ENCODE measurements at regions of chr7 and their contacts with region 1.

Region 1: GRCh38 chr7:92904292-92905131 is 68.1 kb upstream of the CDK6 start:
- DNase-seq: no peak
- H3K4me3 ChIP-seq: no peak overlapping the region
- H3K27ac ChIP-seq: no peak overlapping the region
- H3K4me1 ChIP-seq: no peaks in the 10 kb centered on the region
- H3K27me3 ChIP-seq: no peaks in the 10 kb centered on the region
- CTCF ChIP-seq: no peak
- EP300 ChIP-seq: no peak
- POLR2A ChIP-seq: no peak

Region 2: GRCh38 chr7:92982928-92983327 is 78.4 kb after region 1 on chr7:
- intact Hi-C with region 1: loop called in 1 of 4 experiments (anchors 5 kb)
- DNase-seq: no peak
- H3K4me3 ChIP-seq: no peak overlapping the region
- H3K27ac ChIP-seq: no peak overlapping the region
- H3K4me1 ChIP-seq: no peaks in the 10 kb centered on the region
- H3K27me3 ChIP-seq: no peaks in the 10 kb centered on the region
- CTCF ChIP-seq: no peak
- EP300 ChIP-seq: no peak
- POLR2A ChIP-seq: no peak